Calu3 (cell line): ENCODE measurements at regions of chr1 and their contacts with region 1.

Region 1: DNA sequence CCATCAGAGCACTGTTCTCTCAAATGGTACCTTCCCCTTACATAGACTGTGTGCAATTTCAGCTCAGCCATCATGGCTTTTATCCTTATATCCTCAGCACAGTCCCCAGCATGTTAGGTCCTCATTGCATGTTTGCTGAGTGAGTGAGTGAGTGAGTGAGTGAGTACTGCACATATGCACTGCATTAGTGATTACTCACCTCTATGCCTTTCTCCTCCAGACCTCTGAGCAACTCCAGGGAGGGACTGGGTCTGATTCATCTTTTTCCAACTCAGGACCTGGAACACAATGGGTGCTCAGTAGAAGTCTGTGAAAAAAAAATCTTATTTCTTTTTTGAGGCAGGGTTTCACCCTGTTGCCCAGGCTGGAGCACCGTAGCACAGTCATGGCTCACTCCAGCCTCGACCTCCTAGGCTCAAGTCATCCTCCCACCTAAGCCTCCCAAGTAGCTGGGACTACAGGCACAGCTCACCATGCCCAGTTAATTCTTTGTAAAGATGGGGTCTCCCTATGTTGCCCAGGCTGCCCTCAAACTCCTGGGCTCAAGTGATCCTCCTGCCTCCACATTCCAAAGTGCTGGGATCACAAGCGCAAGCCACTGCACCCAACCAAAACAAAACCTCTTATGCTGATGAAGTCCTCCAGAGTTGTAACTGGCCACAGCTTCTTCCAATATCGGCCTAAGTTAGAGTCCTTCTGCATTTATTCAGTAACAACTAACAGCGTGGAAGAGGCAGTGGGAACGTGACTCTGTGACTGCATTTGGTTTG is 23.7 kb downstream of the RNU5D-1 start:
- DNase-seq: no peak
- H3K4me3 Mint-ChIP-seq: no peak overlapping the region
- H3K27ac Mint-ChIP-seq: peak overlapping the region; percentile 28
- H3K4me1 Mint-ChIP-seq: peaks cover 20% of the 10 kb centered on the region
- H3K27me3 Mint-ChIP-seq: no peaks in the 10 kb centered on the region
- CTCF ChIP-seq: no peak

Region 2: GRCh38 chr1:44594871-44595746 is 112.2 kb before region 1 on chr1:
- CTCF ChIA-PET with region 1: no interaction called
- intact Hi-C with region 1: no loop called
- DNase-seq: peak; percentile 87
- H3K4me3 Mint-ChIP-seq: no peak overlapping the region
- H3K27ac Mint-ChIP-seq: no peak overlapping the region
- H3K4me1 Mint-ChIP-seq: no peaks in the 10 kb centered on the region
- H3K27me3 Mint-ChIP-seq: peaks cover 14% of the 10 kb centered on the region
- CTCF ChIP-seq: peak; percentile 87

Region 3: DNA sequence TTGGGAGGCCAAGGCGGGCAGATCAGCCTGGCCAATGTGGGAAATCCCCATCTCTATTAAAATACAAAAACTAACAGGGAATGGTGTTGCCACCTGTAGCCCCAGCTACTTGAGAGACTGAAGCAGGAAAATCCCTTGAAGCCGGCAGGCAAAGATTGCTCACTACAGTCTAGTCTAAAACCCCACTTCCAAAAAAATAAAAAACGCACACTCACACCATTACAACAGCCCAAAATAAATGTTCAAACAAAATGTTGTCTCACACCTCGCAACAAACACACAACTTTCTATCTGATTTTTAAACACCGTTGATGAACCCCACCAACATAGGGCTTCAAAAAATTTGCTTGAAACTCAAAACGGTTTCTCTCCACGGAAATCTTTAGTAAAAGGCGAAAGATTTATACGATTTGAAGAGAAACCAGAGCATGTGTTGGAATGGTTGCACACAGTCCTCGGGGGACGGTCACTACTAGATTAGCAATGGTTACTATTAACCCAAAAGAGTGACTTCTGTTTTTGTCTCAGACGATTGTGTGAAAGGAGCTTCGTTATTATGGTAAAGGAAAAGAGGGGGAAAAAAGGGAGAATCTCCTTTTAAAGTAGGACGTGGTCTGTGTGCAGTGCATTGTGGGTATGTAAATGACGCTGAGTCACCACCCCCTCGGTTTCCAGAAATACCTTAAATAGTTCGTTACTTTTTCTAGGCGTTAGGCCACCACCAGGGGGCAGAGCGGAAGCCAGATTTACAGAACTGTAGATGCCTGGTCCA is 23.6 kb after region 1 on chr1 and contains the start of gene RNU5D-1:
- CTCF ChIA-PET with region 1: interaction called, 11 read pairs
- intact Hi-C with region 1: no loop called
- DNase-seq: peak; percentile 96
- H3K4me3 Mint-ChIP-seq: peak within 1 kb of the TSS; percentile 58
- H3K27ac Mint-ChIP-seq: peak within 1 kb of the TSS; percentile 100
- H3K4me1 Mint-ChIP-seq: peaks cover 19% of the 10 kb centered on the region
- H3K27me3 Mint-ChIP-seq: no peaks in the 10 kb centered on the region
- CTCF ChIP-seq: peak; percentile 74
- total RNA-seq, gene RNU5D-1: not detected in 2 replicates

Region 4: GRCh38 chr1:45479039-45479748 is 771.9 kb after region 1 on chr1:
- CTCF ChIA-PET with region 1: interaction called, 12 read pairs
- intact Hi-C with region 1: no loop called
- DNase-seq: no peak
- H3K4me3 Mint-ChIP-seq: no peak overlapping the region
- H3K27ac Mint-ChIP-seq: no peak overlapping the region
- H3K4me1 Mint-ChIP-seq: no peaks in the 10 kb centered on the region
- H3K27me3 Mint-ChIP-seq: no peaks in the 10 kb centered on the region
- CTCF ChIP-seq: no peak